ENCODE measurements at regions of chr10 and their contacts with region 1.

Region 1: DNA sequence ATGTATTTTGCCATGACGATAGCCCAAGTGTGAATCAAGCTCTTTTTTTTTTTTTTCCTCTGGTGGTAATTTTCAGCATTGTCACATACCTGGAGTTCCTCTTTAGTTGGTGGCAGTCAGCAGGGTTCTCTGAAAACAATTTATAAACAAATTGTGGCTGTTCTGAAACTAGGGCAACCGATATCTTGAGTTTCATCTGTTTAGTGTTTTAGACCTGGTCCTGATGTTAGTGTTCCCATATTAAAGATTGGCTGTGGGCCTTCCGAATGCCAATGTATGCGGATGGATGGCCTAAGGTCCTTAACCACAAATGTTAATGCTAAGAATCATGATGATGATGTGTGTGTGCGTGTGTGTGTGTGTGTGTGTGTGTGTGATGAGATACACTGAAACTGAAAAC is 713.1 kb downstream of the GATA3 start:
- DNase-seq: no peak
- H3K4me3 ChIP-seq: no peak overlapping the region
- H3K27ac ChIP-seq: no peak overlapping the region
- H3K4me1 ChIP-seq: no peaks in the 10 kb centered on the region
- H3K27me3 ChIP-seq: no peaks in the 10 kb centered on the region
- CTCF ChIP-seq: no peak
- POLR2A ChIP-seq: no peak

Region 2: GRCh38 chr10:9390516-9390915 is 622.9 kb after region 1 on chr10:
- intact Hi-C with region 1: loop called (anchors 5 kb)
- DNase-seq: no peak
- H3K4me3 ChIP-seq: no peak overlapping the region
- H3K27ac ChIP-seq: no peak overlapping the region
- H3K4me1 ChIP-seq: no peaks in the 10 kb centered on the region
- H3K27me3 ChIP-seq: no peaks in the 10 kb centered on the region
- CTCF ChIP-seq: no peak
- POLR2A ChIP-seq: no peak